K562 (cell line): ENCODE measurements at regions of chr1 and their contacts with region 1.

Region 1: GRCh38 chr1:113140588-113141446 is 67.8 kb downstream of the LRIG2 start:
- DNase-seq: peak; percentile 69 to 88 (median 78)
- ATAC-seq: peak; percentile 89
- H3K4me3 ChIP-seq: no peak overlapping the region
- H3K27ac ChIP-seq: peak overlapping the region; percentile 73
- H3K4me1 ChIP-seq: peaks cover 9 to 37% of the 10 kb centered on the region in 2 experiments
- H3K27me3 ChIP-seq: no peaks in the 10 kb centered on the region
- CTCF ChIP-seq: peak; percentile 86 to 97 (median 97)
- EP300 ChIP-seq: peak; percentile 6; the same call in 1 of the 2 replicates
- POLR2A ChIP-seq: no peak
- RAD21 ChIP-seq: peak; percentile 97

Region 2: GRCh38 chr1:112803906-112804762 is 336.7 kb before region 1 on chr1:
- CTCF ChIA-PET with region 1: no interaction called
- POLR2A ChIA-PET with region 1: interaction called, 3 read pairs
- in situ Hi-C with region 1: no loop called
- intact Hi-C with region 1: loop called (anchors 10 kb)
- DNase-seq: peak; percentile 73 to 85 (median 76)
- ATAC-seq: peak; percentile 98
- H3K4me3 ChIP-seq: no peak overlapping the region
- H3K27ac ChIP-seq: no peak overlapping the region
- H3K4me1 ChIP-seq: peaks cover 0 to 3% of the 10 kb centered on the region in 2 experiments; a peak in 1 of 5 replicates
- H3K27me3 ChIP-seq: peaks cover 19 to 28% of the 10 kb centered on the region in 2 experiments; a peak in 4 of 5 replicates
- CTCF ChIP-seq: peak; percentile 96 to 98 (median 97)
- EP300 ChIP-seq: 0 out of 2 replicates have a peak, but pooled peaks have one; percentile 22
- POLR2A ChIP-seq: no peak
- RAD21 ChIP-seq: peak; percentile 99 to 100

Region 3: DNA sequence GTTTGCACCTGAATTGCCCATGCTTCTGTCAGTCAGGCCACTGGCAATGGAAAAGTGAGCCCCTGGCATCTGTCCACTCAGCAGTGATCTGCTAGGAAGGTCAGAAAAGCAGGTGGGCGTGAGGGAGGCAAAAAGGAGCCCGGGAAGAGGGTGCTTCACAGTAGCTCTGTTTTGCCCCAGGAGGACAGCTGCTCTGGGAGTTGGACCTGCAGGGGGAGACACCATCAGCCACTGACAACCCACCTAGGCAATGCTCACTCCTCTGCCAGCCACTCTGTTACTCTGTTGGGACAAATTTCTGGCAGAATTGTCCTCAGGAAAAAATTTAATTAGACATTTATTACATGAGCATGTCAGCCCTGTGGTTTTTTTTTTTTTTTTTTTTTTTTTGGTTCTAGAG is 78.6 kb after region 1 on chr1:
- CTCF ChIA-PET with region 1: no interaction called
- POLR2A ChIA-PET with region 1: no interaction called
- in situ Hi-C with region 1: no loop called
- intact Hi-C with region 1: loop called (anchors 5 kb)
- DNase-seq: peak in 2 of 4 experiments; percentile 29 to 56
- ATAC-seq: peak; percentile 75
- H3K4me3 ChIP-seq: no peak overlapping the region
- H3K27ac ChIP-seq: no peak overlapping the region
- H3K4me1 ChIP-seq: peaks cover 22 to 32% of the 10 kb centered on the region in 2 experiments
- H3K27me3 ChIP-seq: no peaks in the 10 kb centered on the region
- CTCF ChIP-seq: peak; percentile 52 to 64 (median 55)
- EP300 ChIP-seq: no peak
- POLR2A ChIP-seq: no peak
- RAD21 ChIP-seq: peak in 1 of 2 experiments; percentile 43; a peak in 2 of 4 replicates

Region 4: GRCh38 chr1:113242481-113242880 is 101.7 kb after region 1 on chr1:
- CTCF ChIA-PET with region 1: no interaction called
- POLR2A ChIA-PET with region 1: no interaction called
- in situ Hi-C with region 1: no loop called
- intact Hi-C with region 1: loop called (anchors 5 kb)
- DNase-seq: peak in 1 of 4 experiments; percentile 51
- ATAC-seq: peak; percentile 62
- H3K4me3 ChIP-seq: no peak overlapping the region
- H3K27ac ChIP-seq: no peak overlapping the region
- H3K4me1 ChIP-seq: no peaks in the 10 kb centered on the region; a peak in 3 of 5 replicates
- H3K27me3 ChIP-seq: peaks cover 0 to 2% of the 10 kb centered on the region in 2 experiments; a peak in 2 of 5 replicates
- CTCF ChIP-seq: no peak
- EP300 ChIP-seq: no peak
- POLR2A ChIP-seq: no peak
- RAD21 ChIP-seq: no peak

Region 5: DNA sequence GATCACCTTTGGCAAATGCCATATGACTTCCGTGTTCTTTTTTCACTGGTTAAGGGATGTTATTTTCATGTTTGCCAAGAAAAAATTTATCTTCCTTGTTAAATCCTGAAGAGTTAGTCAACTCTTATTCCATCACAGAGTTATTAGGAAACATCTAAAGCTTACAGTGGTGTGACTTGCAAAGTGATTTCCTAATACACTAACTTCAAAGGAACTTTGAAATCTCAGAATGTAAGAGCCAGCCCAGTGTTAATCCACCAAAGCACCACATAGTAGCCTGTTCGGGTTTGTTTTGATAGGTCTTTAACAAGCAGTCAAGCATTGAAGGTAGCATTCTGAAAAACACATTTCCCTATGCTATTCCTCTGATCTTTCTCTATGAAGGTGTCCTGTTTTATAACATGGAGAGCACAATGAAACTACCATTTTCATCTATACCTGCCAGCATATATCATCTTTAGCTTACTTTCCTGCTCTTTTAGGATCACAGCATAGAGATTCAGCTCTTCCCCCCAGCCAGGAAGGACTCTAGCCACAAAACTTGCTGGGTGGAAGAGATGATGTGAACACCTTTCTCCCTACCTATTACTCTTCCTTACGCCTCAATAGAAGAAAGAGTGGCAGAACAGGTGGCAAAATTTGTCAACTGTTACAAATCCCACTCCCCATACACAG is 167.1 kb after region 1 on chr1:
- CTCF ChIA-PET with region 1: no interaction called
- POLR2A ChIA-PET with region 1: no interaction called
- in situ Hi-C with region 1: no loop called
- intact Hi-C with region 1: loop called (anchors 5 kb)
- DNase-seq: no peak
- ATAC-seq: no peak
- H3K4me3 ChIP-seq: no peak overlapping the region
- H3K27ac ChIP-seq: no peak overlapping the region
- H3K4me1 ChIP-seq: no peaks in the 10 kb centered on the region
- H3K27me3 ChIP-seq: no peaks in the 10 kb centered on the region; a peak in 1 of 5 replicates
- CTCF ChIP-seq: no peak
- EP300 ChIP-seq: no peak
- POLR2A ChIP-seq: no peak
- RAD21 ChIP-seq: no peak

Region 6: GRCh38 chr1:113389953-113390834 is 249.4 kb after region 1 on chr1 and contains the start of gene MAGI3:
- CTCF ChIA-PET with region 1: no interaction called
- POLR2A ChIA-PET with region 1: interaction called, 3 read pairs
- in situ Hi-C with region 1: no loop called
- intact Hi-C with region 1: loop called (anchors 1 kb)
- DNase-seq: peak; percentile 97 to 98 (median 98)
- ATAC-seq: peak; percentile 99
- H3K4me3 ChIP-seq: peak within 1 kb of the TSS; percentile 55
- H3K27ac ChIP-seq: peak within 1 kb of the TSS; percentile 52
- H3K4me1 ChIP-seq: peaks cover 17 to 23% of the 10 kb centered on the region in 2 experiments; a peak in 4 of 5 replicates
- H3K27me3 ChIP-seq: peaks cover 6 to 13% of the 10 kb centered on the region in 2 experiments; a peak in 4 of 5 replicates
- CTCF ChIP-seq: 0 out of 6 replicates have a peak, but pooled peaks of 1 of the 3 experiments have one; percentile 4
- EP300 ChIP-seq: no peak
- POLR2A ChIP-seq: peak; percentile 64
- RAD21 ChIP-seq: peak in 1 of 2 experiments; percentile 7; a peak in 2 of 4 replicates
- polyA plus RNA-seq, gene MAGI3: 1.0 to 1.2 TPM

Region 7: GRCh38 chr1:113452921-113453770 is 312.3 kb after region 1 on chr1:
- CTCF ChIA-PET with region 1: no interaction called
- POLR2A ChIA-PET with region 1: no interaction called
- in situ Hi-C with region 1: loop called (anchors 10 kb)
- intact Hi-C with region 1: loop called (anchors 1 kb)
- DNase-seq: peak; percentile 17 to 40 (median 24)
- ATAC-seq: peak; percentile 79
- H3K4me3 ChIP-seq: no peak overlapping the region
- H3K27ac ChIP-seq: no peak overlapping the region
- H3K4me1 ChIP-seq: no peaks in the 10 kb centered on the region
- H3K27me3 ChIP-seq: no peaks in the 10 kb centered on the region; a peak in 1 of 5 replicates
- CTCF ChIP-seq: peak; percentile 27 to 63 (median 49); a peak in 5 of 6 replicates
- EP300 ChIP-seq: no peak
- POLR2A ChIP-seq: no peak
- RAD21 ChIP-seq: peak; percentile 49 to 73

Region 8: DNA sequence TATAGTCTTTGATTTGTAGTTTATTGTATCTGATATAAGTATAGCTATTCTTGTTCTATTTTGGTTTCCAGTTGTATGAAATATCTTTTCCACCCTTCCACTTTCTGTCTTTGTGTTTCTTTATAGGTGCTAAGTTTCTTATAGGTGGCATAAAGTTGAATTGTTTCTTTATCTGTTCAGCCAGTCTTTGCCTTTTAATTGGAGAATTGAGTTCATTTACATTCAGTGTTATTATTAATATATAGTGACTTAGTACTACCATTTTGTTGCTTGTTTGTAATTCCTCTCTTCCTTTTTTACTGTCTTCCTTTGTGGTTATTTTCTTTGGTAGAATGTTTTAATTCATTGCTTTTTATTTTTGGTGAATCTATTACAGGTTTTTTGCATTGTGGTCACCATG is 327.2 kb after region 1 on chr1:
- CTCF ChIA-PET with region 1: no interaction called
- POLR2A ChIA-PET with region 1: no interaction called
- in situ Hi-C with region 1: no loop called
- intact Hi-C with region 1: no loop called
- DNase-seq: no peak
- ATAC-seq: no peak
- H3K4me3 ChIP-seq: no peak overlapping the region
- H3K27ac ChIP-seq: no peak overlapping the region
- H3K4me1 ChIP-seq: no peaks in the 10 kb centered on the region
- H3K27me3 ChIP-seq: no peaks in the 10 kb centered on the region
- CTCF ChIP-seq: no peak
- EP300 ChIP-seq: no peak
- POLR2A ChIP-seq: no peak
- RAD21 ChIP-seq: no peak